ENCODE measurements at regions of chr15 and their contacts with region 1.

Region 1: GRCh38 chr15:64046347-64047153 is at the start of gene DAPK2:
- DNase-seq: peak; percentile 70
- ATAC-seq: peak; percentile 94
- H3K4me3 Mint-ChIP-seq: peak within 1 kb of the TSS; percentile 67
- H3K27ac Mint-ChIP-seq: peak within 1 kb of the TSS; percentile 47
- H3K4me1 Mint-ChIP-seq: peaks cover 17% of the 10 kb centered on the region
- H3K27me3 Mint-ChIP-seq: peaks cover 23% of the 10 kb centered on the region
- total RNA-seq, gene DAPK2: 14.1 to 15.0 TPM

Region 2: GRCh38 chr15:63708126-63708772 is 338.3 kb before region 1 on chr15:
- CTCF ChIA-PET with region 1: interaction called, 10 read pairs
- DNase-seq: peak; percentile 44
- ATAC-seq: peak; percentile 84
- H3K4me3 Mint-ChIP-seq: no peak overlapping the region
- H3K27ac Mint-ChIP-seq: peak overlapping the region; percentile 72
- H3K4me1 Mint-ChIP-seq: peaks cover 17% of the 10 kb centered on the region
- H3K27me3 Mint-ChIP-seq: no peaks in the 10 kb centered on the region

Region 3: GRCh38 chr15:63833021-63833696 is 213.4 kb before region 1 on chr15:
- CTCF ChIA-PET with region 1: interaction called, 10 read pairs
- DNase-seq: peak; percentile 61
- ATAC-seq: peak; percentile 69
- H3K4me3 Mint-ChIP-seq: peak overlapping the region; percentile 97
- H3K27ac Mint-ChIP-seq: peak overlapping the region; percentile 97
- H3K4me1 Mint-ChIP-seq: peaks cover 44% of the 10 kb centered on the region
- H3K27me3 Mint-ChIP-seq: peaks cover 6% of the 10 kb centered on the region

Region 4: DNA sequence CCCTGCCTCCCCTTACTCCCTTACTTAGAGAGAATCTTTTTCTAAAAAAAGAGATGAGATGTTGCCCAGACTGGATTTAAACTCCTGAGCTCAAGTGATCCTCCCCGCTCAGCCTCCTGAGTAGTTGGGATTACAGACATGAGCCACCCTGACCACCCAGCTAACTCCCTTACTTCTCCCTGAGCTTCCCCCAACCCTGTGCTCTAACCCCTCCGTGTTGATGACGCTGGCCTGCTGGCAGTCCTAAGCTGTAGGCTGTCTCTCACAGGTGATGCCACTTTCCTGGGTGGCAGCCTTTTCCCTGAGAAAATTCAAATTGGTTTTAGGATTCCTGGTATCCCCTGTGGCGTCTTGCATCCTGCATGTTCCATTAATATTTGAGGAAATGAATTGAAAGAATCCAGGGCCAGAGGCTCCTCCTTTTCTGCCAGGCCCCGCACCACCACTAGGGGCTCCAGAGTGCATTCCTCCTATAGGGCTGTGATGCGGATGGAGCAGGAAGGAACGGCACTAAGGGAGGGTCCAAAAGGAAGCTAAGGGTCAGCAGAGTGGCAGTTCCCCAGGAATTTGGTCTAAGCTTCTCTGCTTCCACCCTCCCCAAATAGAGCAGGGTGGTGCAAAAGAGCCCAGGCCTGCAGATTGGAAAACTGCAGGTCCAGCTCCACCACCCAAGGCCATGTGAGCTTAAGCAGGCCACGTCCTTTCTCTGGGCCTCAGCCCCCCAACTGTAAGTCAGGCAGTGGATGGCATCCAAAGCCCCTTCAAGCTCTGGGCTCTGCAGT is 101.4 kb before region 1 on chr15:
- CTCF ChIA-PET with region 1: interaction called, 45 read pairs
- DNase-seq: peak; percentile 83
- ATAC-seq: peak; percentile 90
- H3K4me3 Mint-ChIP-seq: no peak overlapping the region
- H3K27ac Mint-ChIP-seq: no peak overlapping the region
- H3K4me1 Mint-ChIP-seq: peaks cover 18% of the 10 kb centered on the region
- H3K27me3 Mint-ChIP-seq: no peaks in the 10 kb centered on the region

Region 5: DNA sequence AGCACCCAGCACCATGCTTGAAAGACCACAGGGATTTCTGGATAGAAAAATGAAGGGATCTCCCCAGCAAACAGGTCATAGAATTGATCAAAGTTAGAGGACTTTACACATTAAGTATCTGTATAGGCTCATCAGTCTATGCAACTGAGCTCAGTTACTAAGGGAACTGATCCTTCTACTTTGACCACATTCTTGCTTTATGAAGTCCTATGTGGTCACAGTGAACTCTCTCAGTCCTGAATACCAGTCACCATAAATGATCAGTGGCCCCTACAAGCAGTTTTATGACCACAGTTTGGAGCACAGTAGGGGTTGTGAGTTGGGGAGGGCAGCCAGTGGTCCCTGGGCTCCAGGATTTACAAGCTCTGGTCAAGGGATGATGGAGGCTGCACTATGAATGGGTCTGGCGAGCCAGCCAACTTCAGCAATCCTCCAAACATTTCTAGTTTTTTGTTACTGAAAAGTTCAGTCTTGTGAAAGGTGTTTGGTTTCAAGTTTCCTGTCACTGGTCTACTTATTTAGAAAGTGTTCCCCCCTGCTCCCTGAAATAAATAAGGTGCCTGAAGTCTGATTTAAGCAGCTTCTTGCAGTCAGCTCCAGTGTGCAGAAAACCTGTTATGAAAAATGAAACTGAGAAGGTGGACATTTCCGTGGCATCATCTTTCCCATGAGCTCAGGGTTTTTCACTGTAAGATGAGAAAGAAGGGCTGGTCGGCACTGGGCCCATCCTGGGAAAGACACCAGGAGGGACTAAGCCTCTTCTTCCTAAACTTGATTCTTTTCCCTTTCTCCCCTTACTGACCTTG is 75.7 kb before region 1 on chr15:
- CTCF ChIA-PET with region 1: interaction called, 12 read pairs
- DNase-seq: peak; percentile 66
- ATAC-seq: peak; percentile 71
- H3K4me3 Mint-ChIP-seq: peak overlapping the region; percentile 58
- H3K27ac Mint-ChIP-seq: peak overlapping the region; percentile 98
- H3K4me1 Mint-ChIP-seq: peaks cover 57% of the 10 kb centered on the region
- H3K27me3 Mint-ChIP-seq: no peaks in the 10 kb centered on the region

Region 6: DNA sequence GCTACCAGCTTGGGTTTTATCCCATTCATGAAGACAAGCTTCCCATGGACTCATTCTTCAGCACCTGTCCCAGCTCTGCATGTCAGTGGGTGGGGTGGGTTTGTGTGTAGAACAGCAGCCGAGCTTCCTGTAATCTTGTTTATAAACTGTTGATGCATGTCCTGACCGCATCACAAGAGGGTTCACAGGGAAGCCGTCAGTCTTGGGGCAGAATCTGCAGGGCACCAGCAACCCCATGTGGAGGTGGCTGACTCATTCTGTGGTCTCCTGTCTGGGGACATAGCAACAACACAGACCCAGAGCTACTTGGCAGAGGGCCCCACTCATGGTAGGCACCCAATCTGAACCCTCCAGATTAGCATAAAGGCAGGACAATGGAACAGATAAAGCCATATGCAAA is 35.8 kb before region 1 on chr15:
- CTCF ChIA-PET with region 1: interaction called, 31 read pairs
- DNase-seq: peak; percentile 96
- ATAC-seq: peak; percentile 94
- H3K4me3 Mint-ChIP-seq: peak overlapping the region; percentile 57
- H3K27ac Mint-ChIP-seq: peak overlapping the region; percentile 91
- H3K4me1 Mint-ChIP-seq: peaks cover 66% of the 10 kb centered on the region
- H3K27me3 Mint-ChIP-seq: no peaks in the 10 kb centered on the region

Region 7: GRCh38 chr15:64067564-64068030 is 21.0 kb after region 1 on chr15:
- CTCF ChIA-PET with region 1: interaction called, 26 read pairs
- DNase-seq: peak; percentile 79
- ATAC-seq: peak; percentile 87
- H3K4me3 Mint-ChIP-seq: no peak overlapping the region
- H3K27ac Mint-ChIP-seq: peak overlapping the region; percentile 57
- H3K4me1 Mint-ChIP-seq: peaks cover 23% of the 10 kb centered on the region
- H3K27me3 Mint-ChIP-seq: no peaks in the 10 kb centered on the region

Region 8: GRCh38 chr15:64112904-64113303 is 66.4 kb after region 1 on chr15:
- CTCF ChIA-PET with region 1: no interaction called
- DNase-seq: no peak
- ATAC-seq: no peak
- H3K4me3 Mint-ChIP-seq: no peak overlapping the region
- H3K27ac Mint-ChIP-seq: no peak overlapping the region
- H3K4me1 Mint-ChIP-seq: peaks cover 33% of the 10 kb centered on the region
- H3K27me3 Mint-ChIP-seq: no peaks in the 10 kb centered on the region

Measured in activated CD8-positive, alpha-beta memory T cell treated with anti-CD3 and anti-CD28 coated beads, Interleukin-2, amount 10 ng/mL, durations not matched to agents 7 days and 5 days (primary cell).